Naive thymus-derived CD4-positive, alpha-beta T cell (primary cell): ENCODE measurements at regions of chr1 and their contacts with region 1.

Region 1: GRCh38 chr1:58688931-58689566 is 10.8 kb downstream of the MYSM1 start:
- DNase-seq: no peak
- ATAC-seq: no peak
- H3K4me3 ChIP-seq: no peak overlapping the region
- H3K4me3 Mint-ChIP-seq: no peak overlapping the region
- H3K27ac ChIP-seq: no peak overlapping the region
- H3K27ac Mint-ChIP-seq: peak overlapping the region in 1 of 9 donors; percentile 66
- H3K4me1 ChIP-seq: no peaks in the 10 kb centered on the region
- H3K4me1 Mint-ChIP-seq: peaks cover 14 to 29% (median 17%) of the 10 kb centered on the region in 7 donors
- H3K27me3 ChIP-seq: no peaks in the 10 kb centered on the region
- H3K27me3 Mint-ChIP-seq: no peaks in the 10 kb centered on the region

Region 2: DNA sequence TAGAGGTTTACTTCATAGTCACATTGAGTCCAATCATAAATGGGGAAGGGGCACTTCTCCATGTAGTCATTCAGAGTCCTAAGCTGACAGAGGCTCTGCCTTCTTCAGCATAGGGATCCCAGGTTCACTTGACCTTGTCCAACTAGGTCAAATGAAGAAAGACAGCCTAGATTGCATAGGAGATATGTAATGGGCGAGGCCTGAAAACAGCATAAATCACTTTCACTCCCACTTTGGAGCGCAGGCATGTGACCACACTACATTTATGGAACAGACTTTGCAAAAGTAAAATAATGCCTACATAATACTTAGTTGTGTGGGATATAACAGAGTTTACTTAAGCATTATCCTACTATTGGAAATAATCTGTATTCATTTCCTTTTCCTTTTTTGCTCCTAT is 1177.4 kb after region 1 on chr1:
- CTCF ChIA-PET with region 1: no interaction called
- POLR2A ChIA-PET with region 1: interaction called, 10 read pairs
- intact Hi-C with region 1: no loop called
- DNase-seq: no peak
- ATAC-seq: no peak
- H3K4me3 ChIP-seq: no peak overlapping the region
- H3K4me3 Mint-ChIP-seq: no peak overlapping the region
- H3K27ac ChIP-seq: no peak overlapping the region
- H3K27ac Mint-ChIP-seq: no peak overlapping the region
- H3K4me1 ChIP-seq: no peaks in the 10 kb centered on the region
- H3K4me1 Mint-ChIP-seq: no peaks in the 10 kb centered on the region
- H3K27me3 ChIP-seq: no peaks in the 10 kb centered on the region
- H3K27me3 Mint-ChIP-seq: no peaks in the 10 kb centered on the region